ENCODE measurements at regions of chr17 and their contacts with region 1.

Region 1: DNA sequence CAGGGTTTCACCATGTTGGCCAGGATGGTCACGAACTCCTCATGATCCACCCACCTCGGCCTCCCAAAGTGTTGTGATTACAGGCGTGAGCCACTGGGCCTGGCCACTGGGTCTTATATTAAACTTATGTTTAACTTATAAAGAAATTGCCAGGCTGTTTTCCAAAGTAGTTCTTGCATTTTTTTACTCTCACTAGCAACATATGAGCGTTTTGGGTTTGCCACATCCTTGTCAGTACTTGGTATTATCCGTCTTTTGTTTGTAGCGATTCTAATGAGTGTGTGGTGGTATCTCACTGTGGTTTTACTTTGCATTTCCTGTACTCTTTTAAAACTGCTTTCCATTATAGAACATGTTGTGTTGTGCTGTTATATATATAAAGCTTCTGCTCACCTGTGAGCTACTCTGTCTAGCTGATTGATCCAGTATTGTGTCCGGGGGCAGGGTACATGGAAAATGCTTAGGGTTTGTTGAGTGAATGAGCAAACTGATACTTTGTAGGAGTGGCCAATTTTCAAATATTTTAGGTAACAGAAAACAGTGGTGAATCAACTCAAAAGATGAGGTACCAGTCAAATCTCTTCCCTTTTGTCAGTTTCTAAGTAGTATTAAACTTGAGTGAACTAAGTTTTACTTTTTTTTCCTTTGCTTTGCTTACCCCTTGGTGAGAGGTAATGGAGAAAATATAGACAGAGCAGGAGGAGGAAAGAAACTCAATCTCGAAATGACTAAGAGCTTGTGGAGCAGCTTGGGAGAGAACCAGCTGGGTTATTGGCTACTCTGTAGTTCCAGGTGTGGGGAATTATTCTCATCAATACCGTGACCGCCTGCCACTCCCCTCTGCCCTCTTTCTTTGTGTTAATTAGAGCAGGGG is 75.8 kb downstream of the PITPNC1 start:
- DNase-seq: peak in 8 of 9 donors; percentile 36 to 86 (median 78)
- ATAC-seq: peak; percentile 93
- H3K4me3 ChIP-seq: peak overlapping the region; percentile 7
- H3K4me3 Mint-ChIP-seq: peak overlapping the region; percentile 17 to 88 (median 78)
- H3K27ac ChIP-seq: peak overlapping the region; percentile 69
- H3K27ac Mint-ChIP-seq: peak overlapping the region; percentile 84 to 100 (median 96)
- H3K4me1 ChIP-seq: peaks cover 77% of the 10 kb centered on the region in 2 donors
- H3K4me1 Mint-ChIP-seq: peaks cover 63 to 100% (median 92%) of the 10 kb centered on the region in 7 donors
- H3K27me3 ChIP-seq: no peaks in the 10 kb centered on the region
- H3K27me3 Mint-ChIP-seq: no peaks in the 10 kb centered on the region

Region 2: DNA sequence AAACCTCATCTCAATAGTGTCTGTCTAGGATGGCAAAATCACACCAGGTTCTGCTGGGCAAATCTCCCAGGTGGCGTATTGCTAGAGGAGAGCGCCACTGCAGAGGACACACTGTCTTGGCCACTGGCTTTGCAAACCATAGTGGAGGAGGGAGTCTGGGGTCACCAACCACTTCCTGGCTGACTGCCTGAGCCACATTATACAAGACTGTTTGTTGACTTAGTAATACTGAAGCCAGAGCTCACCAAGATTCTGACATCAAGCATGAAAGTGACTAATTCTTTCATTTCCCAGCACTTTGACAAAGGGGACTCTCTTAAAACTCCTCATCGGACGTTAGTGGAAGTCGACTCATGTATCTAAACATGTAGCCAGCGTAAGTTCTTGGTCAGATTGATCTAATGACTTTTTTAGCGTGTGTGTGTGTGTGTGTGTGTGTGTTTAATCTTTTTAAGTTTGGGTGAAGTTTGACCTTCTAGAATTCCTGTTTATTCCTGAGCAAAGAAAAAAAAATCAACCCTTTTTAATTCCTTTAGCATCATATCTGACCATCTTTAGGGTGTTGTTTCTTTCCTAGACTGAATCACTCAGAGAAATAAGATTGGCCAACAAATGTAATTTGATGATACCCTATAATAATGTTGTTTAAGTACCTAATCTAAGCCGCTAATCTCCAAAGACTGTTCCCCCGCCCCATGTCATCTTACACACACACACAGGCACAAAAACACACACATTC is 62.1 kb before region 1 on chr17:
- CTCF ChIA-PET with region 1: interaction called, 5 read pairs
- POLR2A ChIA-PET with region 1: interaction called, 5 read pairs
- intact Hi-C with region 1: loop called in 1 of 2 experiments (anchors 2 kb)
- DNase-seq: peak in 6 of 9 donors; percentile 50 to 74 (median 62)
- ATAC-seq: peak; percentile 89
- H3K4me3 ChIP-seq: peak overlapping the region; percentile 34
- H3K4me3 Mint-ChIP-seq: peak overlapping the region; percentile 66 to 90 (median 84)
- H3K27ac ChIP-seq: peak overlapping the region; percentile 76
- H3K27ac Mint-ChIP-seq: peak overlapping the region; percentile 85 to 99 (median 95)
- H3K4me1 ChIP-seq: peaks cover 29 to 46% of the 10 kb centered on the region in 2 donors
- H3K4me1 Mint-ChIP-seq: peaks cover 47 to 95% (median 73%) of the 10 kb centered on the region in 7 donors
- H3K27me3 ChIP-seq: no peaks in the 10 kb centered on the region
- H3K27me3 Mint-ChIP-seq: no peaks in the 10 kb centered on the region

Region 3: DNA sequence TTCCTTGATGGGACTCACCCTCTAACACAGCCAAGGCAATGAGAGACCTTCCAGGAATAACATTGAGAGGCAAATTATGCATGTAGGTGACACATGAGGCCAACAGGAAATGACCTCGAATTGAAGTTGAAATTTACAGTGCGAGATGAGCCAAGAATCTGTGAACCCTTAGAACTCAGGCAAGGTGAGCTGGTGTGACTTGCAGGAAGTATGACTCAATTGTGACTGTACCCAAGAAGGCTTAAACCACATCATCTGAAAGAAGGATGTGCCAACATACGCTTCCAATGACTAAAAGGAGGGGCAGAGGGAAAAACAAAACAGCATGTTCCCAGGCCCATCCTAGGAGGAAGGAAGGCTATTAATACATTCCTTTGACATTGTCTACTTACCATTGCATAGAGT is 31.0 kb before region 1 on chr17:
- CTCF ChIA-PET with region 1: no interaction called
- POLR2A ChIA-PET with region 1: interaction called, 3 read pairs
- intact Hi-C with region 1: loop called in 1 of 2 experiments (anchors 1 kb)
- DNase-seq: peak in 8 of 9 donors; percentile 46 to 86 (median 82)
- ATAC-seq: peak; percentile 97
- H3K4me3 ChIP-seq: peak overlapping the region; percentile 19
- H3K4me3 Mint-ChIP-seq: peak overlapping the region; percentile 8 to 79 (median 69)
- H3K27ac ChIP-seq: peak overlapping the region; percentile 82
- H3K27ac Mint-ChIP-seq: peak overlapping the region; percentile 90 to 99 (median 97)
- H3K4me1 ChIP-seq: peaks cover 51 to 71% of the 10 kb centered on the region in 2 donors
- H3K4me1 Mint-ChIP-seq: peaks cover 54 to 100% (median 87%) of the 10 kb centered on the region in 7 donors
- H3K27me3 ChIP-seq: no peaks in the 10 kb centered on the region
- H3K27me3 Mint-ChIP-seq: no peaks in the 10 kb centered on the region

Region 4: DNA sequence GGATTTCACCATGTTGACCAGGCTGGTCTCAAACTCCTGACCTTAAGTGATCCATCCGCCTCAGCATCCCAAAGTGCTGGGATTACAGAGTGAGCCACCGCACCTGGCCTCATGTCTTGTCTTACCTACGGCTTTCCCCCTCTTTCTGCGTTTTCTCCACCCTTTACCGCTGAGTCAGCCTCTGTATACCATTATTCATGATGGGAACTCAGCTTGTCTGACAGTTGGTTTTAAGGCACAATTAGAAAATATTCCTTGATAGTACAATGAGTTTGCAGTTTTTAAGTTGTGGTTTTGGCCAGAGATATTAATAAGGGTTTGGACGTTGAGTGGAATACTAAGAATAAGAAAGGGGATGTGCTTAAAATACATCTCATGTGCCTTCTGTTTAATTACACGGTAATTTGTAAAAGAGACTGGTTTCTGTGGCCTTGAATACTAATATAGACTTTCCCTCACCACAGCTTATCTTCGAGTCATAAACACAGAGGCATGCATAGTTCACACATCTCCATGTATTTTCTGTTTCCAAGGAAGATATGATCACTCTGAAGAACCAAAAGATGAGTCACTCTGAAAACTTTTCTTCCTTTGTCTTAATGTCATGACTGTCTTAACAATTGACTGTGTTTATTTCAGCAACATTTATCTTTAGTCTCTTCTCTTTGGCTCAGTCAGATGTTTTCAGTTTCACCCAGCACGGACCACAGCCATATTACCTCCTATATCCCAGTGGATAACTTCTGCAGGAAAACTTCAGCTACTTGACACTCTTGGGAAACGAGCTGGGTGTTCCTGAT is 21.5 kb before region 1 on chr17:
- CTCF ChIA-PET with region 1: no interaction called
- POLR2A ChIA-PET with region 1: interaction called, 335 read pairs
- intact Hi-C with region 1: loop called (anchors 1 to 2 kb)
- DNase-seq: no peak
- ATAC-seq: peak; percentile 18
- H3K4me3 ChIP-seq: no peak overlapping the region
- H3K4me3 Mint-ChIP-seq: peak overlapping the region in 9 of 10 donors; percentile 8 to 80 (median 26)
- H3K27ac ChIP-seq: peak overlapping the region; percentile 43
- H3K27ac Mint-ChIP-seq: peak overlapping the region; percentile 12 to 100 (median 85)
- H3K4me1 ChIP-seq: peaks cover 41 to 50% of the 10 kb centered on the region in 2 donors
- H3K4me1 Mint-ChIP-seq: peaks cover 27 to 93% (median 75%) of the 10 kb centered on the region in 7 donors
- H3K27me3 ChIP-seq: no peaks in the 10 kb centered on the region
- H3K27me3 Mint-ChIP-seq: no peaks in the 10 kb centered on the region

Region 5: GRCh38 chr17:67441052-67441927 is 11.6 kb before region 1 on chr17:
- CTCF ChIA-PET with region 1: interaction called, 31 read pairs
- POLR2A ChIA-PET with region 1: interaction called, 335 read pairs
- intact Hi-C with region 1: loop called (anchors 1 kb)
- DNase-seq: peak; percentile 30 to 90 (median 87)
- ATAC-seq: peak; percentile 94
- H3K4me3 ChIP-seq: peak overlapping the region; percentile 64
- H3K4me3 Mint-ChIP-seq: peak overlapping the region; percentile 75 to 88 (median 84)
- H3K27ac ChIP-seq: peak overlapping the region; percentile 93
- H3K27ac Mint-ChIP-seq: peak overlapping the region; percentile 95 to 100 (median 99)
- H3K4me1 ChIP-seq: peaks cover 66 to 87% of the 10 kb centered on the region in 2 donors
- H3K4me1 Mint-ChIP-seq: peaks cover 63 to 98% (median 90%) of the 10 kb centered on the region in 7 donors
- H3K27me3 ChIP-seq: no peaks in the 10 kb centered on the region
- H3K27me3 Mint-ChIP-seq: no peaks in the 10 kb centered on the region

Region 6: DNA sequence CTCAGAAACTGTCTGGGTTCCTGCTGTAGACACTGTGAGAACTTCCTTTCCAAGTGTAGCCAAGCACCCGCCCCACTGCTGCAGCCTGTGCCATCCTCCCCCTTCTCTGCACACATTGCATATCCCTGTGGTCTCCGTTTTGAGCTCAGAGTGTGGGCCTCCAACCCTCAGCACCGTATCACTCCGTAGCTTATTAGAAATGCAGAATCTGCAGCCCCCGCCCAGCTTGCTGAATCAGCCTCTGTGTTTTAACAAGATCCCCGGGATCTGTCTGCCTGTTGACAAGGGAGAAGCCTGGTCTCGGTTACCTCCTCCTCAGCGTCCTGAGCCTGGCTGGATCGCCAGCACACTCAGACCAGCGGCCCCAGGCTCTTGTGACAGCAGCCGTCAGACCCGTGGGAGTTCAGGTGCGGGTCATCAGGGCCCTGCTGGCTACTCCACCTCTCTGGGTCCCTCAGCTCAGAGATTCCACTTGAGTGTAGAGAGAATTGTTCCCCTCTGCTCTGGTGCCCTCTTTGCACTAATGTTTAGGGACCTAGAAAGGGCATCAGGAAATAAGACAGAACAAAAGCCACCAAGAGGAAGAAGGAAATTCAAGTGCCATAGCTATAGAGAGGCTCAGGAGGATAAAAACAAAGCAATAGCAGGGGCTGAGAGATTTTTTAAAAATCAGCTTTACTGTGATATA is 16.4 kb after region 1 on chr17:
- CTCF ChIA-PET with region 1: interaction called, 16 read pairs
- POLR2A ChIA-PET with region 1: interaction called, 52 read pairs
- intact Hi-C with region 1: loop called in 1 of 2 experiments (anchors 1 kb)
- DNase-seq: peak in 2 of 9 donors; percentile 28 to 57
- ATAC-seq: peak; percentile 58
- H3K4me3 ChIP-seq: peak overlapping the region; percentile 53
- H3K4me3 Mint-ChIP-seq: peak overlapping the region; percentile 66 to 90 (median 82)
- H3K27ac ChIP-seq: peak overlapping the region; percentile 74
- H3K27ac Mint-ChIP-seq: peak overlapping the region; percentile 82 to 97 (median 92)
- H3K4me1 ChIP-seq: peaks cover 32 to 63% of the 10 kb centered on the region in 2 donors
- H3K4me1 Mint-ChIP-seq: peaks cover 39 to 84% (median 65%) of the 10 kb centered on the region in 7 donors
- H3K27me3 ChIP-seq: no peaks in the 10 kb centered on the region
- H3K27me3 Mint-ChIP-seq: no peaks in the 10 kb centered on the region

Region 7: GRCh38 chr17:67520252-67520906 is 67.5 kb after region 1 on chr17:
- CTCF ChIA-PET with region 1: no interaction called
- POLR2A ChIA-PET with region 1: no interaction called
- intact Hi-C with region 1: no loop called
- DNase-seq: peak in 1 of 9 donors; percentile 10
- ATAC-seq: peak; percentile 61
- H3K4me3 ChIP-seq: no peak overlapping the region
- H3K4me3 Mint-ChIP-seq: peak overlapping the region; percentile 26 to 80 (median 58)
- H3K27ac ChIP-seq: peak overlapping the region; percentile 19
- H3K27ac Mint-ChIP-seq: peak overlapping the region in 8 of 9 donors; percentile 61 to 93 (median 76)
- H3K4me1 ChIP-seq: peaks cover 4 to 8% of the 10 kb centered on the region in 2 donors
- H3K4me1 Mint-ChIP-seq: peaks cover 26 to 88% (median 72%) of the 10 kb centered on the region in 7 donors
- H3K27me3 ChIP-seq: no peaks in the 10 kb centered on the region
- H3K27me3 Mint-ChIP-seq: no peaks in the 10 kb centered on the region

Region 8: DNA sequence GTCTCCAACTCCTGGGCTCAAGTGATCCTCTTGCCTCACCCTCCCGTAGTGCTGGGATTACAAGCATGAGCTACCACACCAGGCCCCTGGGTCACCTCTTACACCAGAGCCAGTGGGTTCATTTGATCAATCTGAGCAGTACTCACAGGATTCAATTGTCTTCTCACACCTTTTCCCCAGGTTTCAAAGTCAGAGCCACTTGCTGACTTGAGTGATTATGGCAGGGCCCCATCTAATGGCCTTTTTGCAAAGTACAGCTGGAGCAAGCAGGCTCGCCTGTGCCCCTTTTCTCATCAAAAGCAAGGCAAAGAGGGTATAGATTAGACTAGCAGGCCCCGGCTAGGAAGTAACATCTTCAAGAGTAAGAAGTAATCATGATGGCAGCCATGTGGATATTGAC is 150.0 kb after region 1 on chr17:
- CTCF ChIA-PET with region 1: no interaction called
- POLR2A ChIA-PET with region 1: no interaction called
- intact Hi-C with region 1: no loop called
- DNase-seq: peak in 8 of 9 donors; percentile 24 to 65 (median 53)
- ATAC-seq: peak; percentile 74
- H3K4me3 ChIP-seq: no peak overlapping the region
- H3K4me3 Mint-ChIP-seq: no peak overlapping the region
- H3K27ac ChIP-seq: no peak overlapping the region
- H3K27ac Mint-ChIP-seq: peak overlapping the region in 6 of 9 donors; percentile 36 to 83 (median 70)
- H3K4me1 ChIP-seq: no peaks in the 10 kb centered on the region
- H3K4me1 Mint-ChIP-seq: peaks cover 5 to 47% (median 39%) of the 10 kb centered on the region in 7 donors
- H3K27me3 ChIP-seq: no peaks in the 10 kb centered on the region
- H3K27me3 Mint-ChIP-seq: no peaks in the 10 kb centered on the region

Region 9: DNA sequence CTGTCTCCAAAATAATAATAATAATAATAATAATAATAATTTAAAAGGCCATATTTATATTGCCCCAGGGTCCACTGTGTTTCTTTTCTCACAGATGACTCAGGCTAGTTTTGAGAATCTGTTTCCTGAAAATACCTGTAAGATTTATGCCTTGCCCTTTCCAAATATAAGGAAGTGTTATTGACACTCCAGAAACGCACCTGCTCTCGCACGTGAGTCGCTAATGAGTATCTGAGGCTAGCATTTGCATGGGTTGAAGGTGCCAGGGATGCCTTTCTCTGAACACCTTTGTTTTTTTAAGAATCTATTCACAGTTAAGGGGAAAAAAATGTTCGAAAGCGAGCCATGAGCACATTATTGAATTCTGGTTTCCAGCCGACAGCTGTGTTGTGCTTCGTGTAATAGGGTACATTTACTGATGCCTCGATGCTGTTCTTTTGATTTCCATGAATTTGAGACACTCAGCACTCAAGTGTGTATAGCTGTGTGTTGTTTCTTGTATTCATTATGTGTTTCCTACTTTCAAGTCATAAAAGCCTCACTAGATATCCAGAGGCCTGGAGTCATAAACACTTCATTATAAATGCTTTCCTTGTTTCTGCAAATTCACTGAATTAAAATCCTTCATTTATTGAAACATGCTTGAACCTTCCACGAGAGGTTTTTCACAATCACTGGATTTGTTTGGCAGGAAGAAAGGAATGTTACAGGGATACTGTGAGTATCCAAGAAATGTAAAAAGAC is 219.8 kb after region 1 on chr17:
- CTCF ChIA-PET with region 1: no interaction called
- POLR2A ChIA-PET with region 1: no interaction called
- intact Hi-C with region 1: no loop called
- DNase-seq: no peak
- ATAC-seq: no peak
- H3K4me3 ChIP-seq: no peak overlapping the region
- H3K4me3 Mint-ChIP-seq: no peak overlapping the region
- H3K27ac ChIP-seq: no peak overlapping the region
- H3K27ac Mint-ChIP-seq: peak overlapping the region in 1 of 9 donors; percentile 28
- H3K4me1 ChIP-seq: no peaks in the 10 kb centered on the region
- H3K4me1 Mint-ChIP-seq: peaks cover 0 to 10% (median 0%) of the 10 kb centered on the region in 7 donors
- H3K27me3 ChIP-seq: no peaks in the 10 kb centered on the region
- H3K27me3 Mint-ChIP-seq: no peaks in the 10 kb centered on the region

Measured in naive thymus-derived CD4-positive, alpha-beta T cell (primary cell).